CD4-positive, alpha-beta T cell (primary cell): ENCODE measurements at regions of chr6 and their contacts with region 1.

Region 1: DNA sequence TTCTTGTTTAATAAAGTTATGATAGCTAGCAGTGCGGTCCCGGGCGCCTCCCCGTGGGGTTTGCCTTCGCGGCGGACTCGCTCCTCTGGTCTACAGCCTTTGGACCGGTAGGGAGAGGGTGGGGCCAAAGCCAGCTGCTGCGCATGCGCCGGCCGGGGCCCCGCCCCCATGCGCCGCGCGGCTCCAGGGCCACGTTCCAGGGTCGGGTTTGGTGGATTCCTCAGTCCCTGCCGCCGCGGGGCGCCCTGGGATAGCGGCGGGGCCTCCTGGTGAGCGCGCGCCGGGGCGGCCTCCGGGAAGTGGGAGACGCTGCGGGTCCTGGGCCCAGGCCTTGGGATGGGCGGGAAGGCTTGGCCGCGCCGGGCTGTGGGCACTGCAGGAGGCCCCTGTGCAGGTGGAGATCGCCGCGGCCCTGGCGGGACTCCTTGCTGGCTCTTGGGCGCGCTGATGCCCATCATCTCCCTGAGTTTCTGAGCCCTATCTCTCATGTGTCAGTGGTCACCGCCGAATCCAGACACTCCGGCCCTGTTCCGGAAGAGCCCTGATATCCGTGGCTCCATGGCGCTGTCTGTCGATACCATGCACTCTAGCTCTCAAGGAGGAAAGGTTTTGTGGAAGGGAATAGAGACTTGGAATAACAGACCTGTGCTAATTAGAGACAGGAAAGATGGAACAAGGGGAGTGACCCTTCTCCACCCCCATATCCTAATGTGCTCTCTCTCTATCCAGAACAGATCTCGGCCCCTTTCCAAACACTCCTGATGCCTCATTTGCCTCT is at the start of gene VARS2:
- DNase-seq: peak; percentile 69 to 94 (median 80)
- ATAC-seq: peak; percentile 96
- H3K4me3 ChIP-seq: peak within 1 kb of the TSS; percentile 82
- H3K4me3 Mint-ChIP-seq: peak within 1 kb of the TSS; percentile 96
- H3K27ac ChIP-seq: peak within 1 kb of the TSS; percentile 45 to 53
- H3K27ac Mint-ChIP-seq: peak within 1 kb of the TSS; percentile 87
- H3K4me1 ChIP-seq: peaks cover 19% of the 10 kb centered on the region
- H3K4me1 Mint-ChIP-seq: peaks cover 21% of the 10 kb centered on the region
- H3K27me3 ChIP-seq: no peaks in the 10 kb centered on the region
- H3K27me3 Mint-ChIP-seq: no peaks in the 10 kb centered on the region
- CTCF ChIP-seq: no peak
- total RNA-seq, gene VARS2: 19.3 to 21.7 TPM

Region 2: DNA sequence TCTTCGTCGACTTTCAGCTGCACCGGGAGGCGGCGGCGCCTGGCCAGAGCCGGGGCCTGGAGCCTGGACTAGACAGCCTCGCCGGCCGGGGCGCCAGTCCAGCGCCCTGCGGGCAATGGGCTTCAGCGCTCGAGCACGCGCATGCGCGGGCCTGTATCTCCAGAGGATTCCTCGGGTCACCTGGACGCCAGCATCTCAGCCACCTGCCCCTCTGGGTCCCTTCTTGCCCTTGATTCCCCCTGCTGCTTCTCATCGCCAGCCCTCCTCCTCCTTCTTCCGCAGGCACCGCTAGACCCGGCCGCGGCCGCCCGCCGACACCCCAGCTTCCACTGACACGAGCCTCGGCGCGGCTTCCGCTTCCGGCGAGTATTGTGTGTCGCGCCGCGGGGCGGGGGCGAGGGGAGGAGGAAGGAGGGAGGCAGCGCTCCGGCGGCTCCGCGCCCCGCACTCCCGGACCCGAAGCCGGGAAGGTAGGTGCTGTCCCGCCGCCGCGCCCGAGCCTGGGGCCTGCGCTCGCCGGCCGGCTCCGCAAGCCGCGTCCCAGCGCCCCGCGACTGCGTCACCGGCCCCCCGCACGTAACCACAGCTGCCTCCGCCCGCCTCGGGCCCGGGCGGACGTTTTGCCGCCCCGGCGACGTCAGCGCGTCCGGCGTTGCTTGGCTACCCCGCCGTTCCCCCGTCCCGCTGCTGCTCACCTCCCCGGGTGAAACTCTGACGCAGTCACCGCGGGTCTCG is 587.6 kb before region 1 on chr6 and contains the start of gene TRIM39:
- CTCF ChIA-PET with region 1: no interaction called
- POLR2A ChIA-PET with region 1: interaction called, 3 read pairs
- intact Hi-C with region 1: loop called in 1 of 2 experiments (anchors 10 kb)
- DNase-seq: peak; percentile 73 to 97 (median 87)
- ATAC-seq: peak; percentile 59
- H3K4me3 ChIP-seq: peak within 1 kb of the TSS; percentile 83
- H3K4me3 Mint-ChIP-seq: peak within 1 kb of the TSS; percentile 97
- H3K27ac ChIP-seq: peak within 1 kb of the TSS; percentile 98 to 99
- H3K27ac Mint-ChIP-seq: peak within 1 kb of the TSS; percentile 97
- H3K4me1 ChIP-seq: peaks cover 52% of the 10 kb centered on the region
- H3K4me1 Mint-ChIP-seq: peaks cover 68% of the 10 kb centered on the region
- H3K27me3 ChIP-seq: no peaks in the 10 kb centered on the region
- H3K27me3 Mint-ChIP-seq: no peaks in the 10 kb centered on the region
- CTCF ChIP-seq: no peak
- total RNA-seq, gene TRIM39: 38.2 to 38.3 TPM

Region 3: GRCh38 chr6:31068669-31069340 is 154.5 kb after region 1 on chr6:
- CTCF ChIA-PET with region 1: no interaction called
- POLR2A ChIA-PET with region 1: no interaction called
- intact Hi-C with region 1: loop called in 1 of 2 experiments (anchors 1 kb)
- DNase-seq: peak; percentile 42 to 84 (median 64)
- ATAC-seq: peak; percentile 91
- H3K4me3 ChIP-seq: no peak overlapping the region
- H3K4me3 Mint-ChIP-seq: no peak overlapping the region
- H3K27ac ChIP-seq: no peak overlapping the region
- H3K27ac Mint-ChIP-seq: no peak overlapping the region
- H3K4me1 ChIP-seq: no peaks in the 10 kb centered on the region
- H3K4me1 Mint-ChIP-seq: no peaks in the 10 kb centered on the region
- H3K27me3 ChIP-seq: no peaks in the 10 kb centered on the region
- H3K27me3 Mint-ChIP-seq: peaks cover 4% of the 10 kb centered on the region
- CTCF ChIP-seq: peak; percentile 81

Region 4: DNA sequence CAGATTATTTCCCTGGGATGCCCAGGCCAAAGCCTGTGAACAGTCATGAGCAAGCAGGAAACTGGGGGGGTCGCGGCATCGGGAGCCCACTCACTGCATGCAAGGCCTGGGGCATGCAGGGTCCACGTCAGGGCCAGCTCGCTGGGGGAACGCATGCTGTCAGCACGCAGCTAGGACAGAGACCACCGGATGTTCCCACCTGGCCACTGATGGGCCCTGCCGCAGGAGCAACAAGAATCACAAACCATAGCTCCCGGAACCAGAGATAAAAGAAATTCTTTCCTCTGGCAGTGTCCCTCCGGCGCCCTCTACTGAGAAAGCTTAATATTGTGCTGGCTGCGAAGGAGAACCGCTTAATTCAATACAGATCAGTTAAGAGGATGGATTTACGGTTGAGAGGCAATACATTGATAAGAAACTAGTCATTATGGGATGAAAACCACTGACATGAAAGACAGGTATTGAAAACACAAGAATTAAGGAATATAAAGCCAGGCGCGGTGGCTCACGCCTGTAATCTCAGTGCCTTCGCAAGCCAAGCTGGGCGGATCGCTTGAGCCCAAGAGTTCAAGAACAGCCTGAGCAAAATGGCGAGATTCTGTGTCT is 165.5 kb after region 1 on chr6:
- CTCF ChIA-PET with region 1: interaction called, 10 read pairs
- POLR2A ChIA-PET with region 1: interaction called, 7 read pairs
- intact Hi-C with region 1: no loop called
- DNase-seq: peak; percentile 52 to 82 (median 63)
- ATAC-seq: peak; percentile 94
- H3K4me3 ChIP-seq: peak overlapping the region; percentile 35
- H3K4me3 Mint-ChIP-seq: peak overlapping the region; percentile 61
- H3K27ac ChIP-seq: no peak overlapping the region
- H3K27ac Mint-ChIP-seq: no peak overlapping the region
- H3K4me1 ChIP-seq: peaks cover 9% of the 10 kb centered on the region
- H3K4me1 Mint-ChIP-seq: peaks cover 9% of the 10 kb centered on the region
- H3K27me3 ChIP-seq: no peaks in the 10 kb centered on the region
- H3K27me3 Mint-ChIP-seq: peaks cover 5% of the 10 kb centered on the region
- CTCF ChIP-seq: peak; percentile 96

Region 5: GRCh38 chr6:31087494-31088089 is 173.3 kb after region 1 on chr6:
- CTCF ChIA-PET with region 1: interaction called, 4 read pairs
- POLR2A ChIA-PET with region 1: interaction called, 3 read pairs
- intact Hi-C with region 1: loop called in 1 of 2 experiments (anchors 2 kb)
- DNase-seq: peak; percentile 77 to 96 (median 90)
- ATAC-seq: peak; percentile 99
- H3K4me3 ChIP-seq: no peak overlapping the region
- H3K4me3 Mint-ChIP-seq: no peak overlapping the region
- H3K27ac ChIP-seq: no peak overlapping the region
- H3K27ac Mint-ChIP-seq: no peak overlapping the region
- H3K4me1 ChIP-seq: peaks cover 10% of the 10 kb centered on the region
- H3K4me1 Mint-ChIP-seq: peaks cover 21% of the 10 kb centered on the region
- H3K27me3 ChIP-seq: no peaks in the 10 kb centered on the region
- H3K27me3 Mint-ChIP-seq: no peaks in the 10 kb centered on the region
- CTCF ChIP-seq: peak; percentile 74

Region 6: GRCh38 chr6:31128093-31128676 is 213.9 kb after region 1 on chr6:
- CTCF ChIA-PET with region 1: no interaction called
- POLR2A ChIA-PET with region 1: no interaction called
- intact Hi-C with region 1: loop called in 1 of 2 experiments (anchors 5 kb)
- DNase-seq: peak; percentile 58 to 86 (median 73)
- ATAC-seq: peak; percentile 95
- H3K4me3 ChIP-seq: no peak overlapping the region
- H3K4me3 Mint-ChIP-seq: no peak overlapping the region
- H3K27ac ChIP-seq: no peak overlapping the region
- H3K27ac Mint-ChIP-seq: no peak overlapping the region
- H3K4me1 ChIP-seq: peaks cover 8% of the 10 kb centered on the region
- H3K4me1 Mint-ChIP-seq: peaks cover 6% of the 10 kb centered on the region
- H3K27me3 ChIP-seq: no peaks in the 10 kb centered on the region
- H3K27me3 Mint-ChIP-seq: peaks cover 6% of the 10 kb centered on the region
- CTCF ChIP-seq: peak; percentile 92

Region 7: GRCh38 chr6:31139599-31139998 is 225.3 kb after region 1 on chr6:
- CTCF ChIA-PET with region 1: no interaction called
- POLR2A ChIA-PET with region 1: no interaction called
- intact Hi-C with region 1: no loop called
- DNase-seq: no peak
- ATAC-seq: no peak
- H3K4me3 ChIP-seq: no peak overlapping the region
- H3K4me3 Mint-ChIP-seq: no peak overlapping the region
- H3K27ac ChIP-seq: no peak overlapping the region
- H3K27ac Mint-ChIP-seq: no peak overlapping the region
- H3K4me1 ChIP-seq: peaks cover 9% of the 10 kb centered on the region
- H3K4me1 Mint-ChIP-seq: peaks cover 6% of the 10 kb centered on the region
- H3K27me3 ChIP-seq: no peaks in the 10 kb centered on the region
- H3K27me3 Mint-ChIP-seq: no peaks in the 10 kb centered on the region
- CTCF ChIP-seq: no peak